ENCODE measurements at regions of chr13 and their contacts with region 1.

Region 1: DNA sequence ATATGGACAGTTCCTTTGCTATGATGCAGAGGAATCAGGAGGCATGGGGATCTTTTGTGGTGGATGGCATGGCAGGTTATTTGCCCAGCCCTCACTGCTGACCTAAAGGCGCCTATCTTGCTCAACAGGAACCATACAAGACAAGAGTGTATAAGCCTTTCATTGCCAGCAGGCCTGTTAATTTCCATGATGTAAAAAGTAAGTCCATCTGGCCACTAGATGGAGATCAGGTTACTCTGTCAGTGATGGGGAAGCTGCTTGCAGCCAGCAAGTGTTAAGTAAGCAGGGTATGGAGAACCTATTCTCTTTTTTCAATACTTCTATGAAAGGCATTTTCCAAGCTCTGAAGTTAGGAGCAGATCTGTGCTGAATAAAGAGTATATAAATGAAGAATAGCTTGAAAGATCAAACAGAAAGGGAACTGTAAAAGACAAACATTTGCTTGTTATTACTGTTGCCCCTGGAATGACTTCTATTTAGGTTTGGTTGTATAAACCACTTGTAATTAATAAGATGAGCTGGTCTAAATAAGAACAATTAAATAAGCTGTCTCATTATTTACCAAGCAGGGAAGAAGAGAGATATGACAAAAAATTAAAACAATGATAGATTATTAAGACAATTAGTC is 210.9 kb downstream of the RGCC start:
- DNase-seq: peak in 1 of 3 donors; percentile 61
- ATAC-seq: peak; percentile 95
- H3K4me3 ChIP-seq: no peak overlapping the region
- H3K4me1 ChIP-seq: no peaks in the 10 kb centered on the region
- CTCF ChIP-seq: no peak

Region 2: DNA sequence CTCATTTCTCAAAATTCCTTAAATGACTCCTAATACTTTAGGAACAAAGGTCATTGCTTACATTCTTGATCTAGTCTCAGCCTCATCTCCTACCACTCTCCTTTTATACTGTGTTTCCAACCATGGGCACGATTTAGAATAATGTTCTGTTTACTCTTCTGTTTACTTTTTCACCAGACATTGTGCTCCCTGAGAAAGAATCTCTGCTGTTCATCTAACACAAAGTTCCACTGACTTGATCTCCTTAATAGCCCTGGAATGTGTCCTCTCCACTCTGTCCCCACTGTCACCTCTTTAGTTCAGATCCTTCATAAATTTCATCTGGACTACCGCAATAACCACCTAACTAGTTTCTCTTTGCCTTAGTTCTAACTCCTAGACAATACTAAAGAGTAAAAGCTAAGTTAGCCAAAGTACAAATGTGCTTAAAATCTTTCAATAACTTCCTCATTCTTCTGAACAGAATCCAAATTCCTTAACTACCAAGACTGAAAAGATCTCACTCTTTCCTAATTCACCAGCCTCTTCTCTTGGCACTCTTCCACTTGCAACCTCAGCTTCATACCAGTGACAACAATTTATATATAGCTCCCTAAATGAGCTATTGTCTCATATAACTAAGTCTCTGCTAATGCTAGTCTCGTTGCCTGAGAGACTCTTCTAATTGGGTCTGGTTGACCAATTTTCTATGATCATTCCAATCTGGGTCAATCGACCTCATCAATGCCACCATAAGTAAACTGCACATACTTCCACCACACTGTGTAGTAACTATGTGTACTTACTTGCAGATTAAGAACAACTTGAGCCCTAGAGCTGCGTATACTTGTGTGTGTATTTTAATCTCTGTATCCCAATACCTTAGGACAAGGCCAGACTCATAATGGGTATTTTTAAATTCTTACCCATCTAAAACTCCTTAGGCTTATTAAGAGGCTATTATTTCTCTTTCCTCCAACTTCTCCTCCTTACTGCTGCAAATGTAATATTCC is 112.8 kb after region 1 on chr13:
- intact Hi-C with region 1: no loop called
- DNase-seq: no peak
- ATAC-seq: no peak
- H3K4me3 ChIP-seq: no peak overlapping the region
- H3K4me1 ChIP-seq: no peaks in the 10 kb centered on the region
- CTCF ChIP-seq: no peak

Region 3: GRCh38 chr13:42110410-42111155 is 442.3 kb after region 1 on chr13:
- intact Hi-C with region 1: loop called (anchors 5 kb)
- DNase-seq: peak in 1 of 3 donors; percentile 58
- ATAC-seq: peak; percentile 86
- H3K4me3 ChIP-seq: no peak overlapping the region
- H3K4me1 ChIP-seq: no peaks in the 10 kb centered on the region
- CTCF ChIP-seq: peak; percentile 47